IMR-90 (cell line): ENCODE measurements at regions of chr3 and their contacts with region 1.

Region 1: GRCh38 chr3:16040991-16041390 is 133.5 kb upstream of the GALNT15 start:
- DNase-seq: no peak
- ATAC-seq: no peak
- H3K4me3 ChIP-seq: no peak overlapping the region
- H3K27ac ChIP-seq: no peak overlapping the region
- H3K4me1 ChIP-seq: no peaks in the 10 kb centered on the region
- H3K27me3 ChIP-seq: no peaks in the 10 kb centered on the region
- CTCF ChIP-seq: no peak
- POLR2A ChIP-seq: no peak
- RAD21 ChIP-seq: no peak

Region 2: DNA sequence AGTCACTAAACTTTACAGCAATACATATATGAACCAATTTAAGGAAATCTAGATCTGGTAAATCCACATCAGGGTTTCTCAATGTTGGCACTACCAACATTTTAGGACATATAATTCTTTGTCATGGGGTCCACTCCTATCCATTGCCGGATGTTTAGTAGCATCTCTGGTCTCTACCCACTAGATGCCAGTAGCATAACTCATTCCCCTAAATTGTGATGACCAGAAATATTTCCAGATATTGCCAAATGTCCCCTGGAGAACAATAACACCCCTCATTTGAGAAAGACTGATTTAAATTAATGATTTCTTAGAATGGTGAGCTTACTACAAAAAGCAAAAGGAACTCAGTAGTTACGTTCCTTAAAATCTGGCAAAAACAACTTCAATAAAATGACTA is 220.1 kb before region 1 on chr3:
- CTCF ChIA-PET with region 1: no interaction called
- POLR2A ChIA-PET with region 1: no interaction called
- dilution Hi-C with region 1: no loop called
- in situ Hi-C with region 1: loop called (anchors 5 kb)
- intact Hi-C with region 1: no loop called
- DNase-seq: no peak
- ATAC-seq: no peak
- H3K4me3 ChIP-seq: no peak overlapping the region
- H3K27ac ChIP-seq: no peak overlapping the region
- H3K4me1 ChIP-seq: 0 out of 2 replicates have a peak, but pooled peaks cover under 1% of the 10 kb centered on the region
- H3K27me3 ChIP-seq: no peaks in the 10 kb centered on the region
- CTCF ChIP-seq: peak; percentile 20; the same call in 1 of the 2 replicates
- POLR2A ChIP-seq: no peak
- RAD21 ChIP-seq: no peak; the same call in 1 of the 2 replicates

Region 3: GRCh38 chr3:16240283-16241023 is 199.5 kb after region 1 on chr3:
- CTCF ChIA-PET with region 1: no interaction called
- POLR2A ChIA-PET with region 1: no interaction called
- dilution Hi-C with region 1: no loop called
- in situ Hi-C with region 1: loop called (anchors 5 kb)
- intact Hi-C with region 1: no loop called
- DNase-seq: peak; percentile 81
- ATAC-seq: peak; percentile 62
- H3K4me3 ChIP-seq: no peak overlapping the region
- H3K27ac ChIP-seq: peak overlapping the region; percentile 76; the same call in 1 of the 2 replicates
- H3K4me1 ChIP-seq: peaks cover 18% of the 10 kb centered on the region
- H3K27me3 ChIP-seq: no peaks in the 10 kb centered on the region
- CTCF ChIP-seq: no peak
- POLR2A ChIP-seq: no peak
- RAD21 ChIP-seq: no peak